HEK293T (cell line): ENCODE measurements at regions of chr12 and their contacts with region 1.

Region 1: DNA sequence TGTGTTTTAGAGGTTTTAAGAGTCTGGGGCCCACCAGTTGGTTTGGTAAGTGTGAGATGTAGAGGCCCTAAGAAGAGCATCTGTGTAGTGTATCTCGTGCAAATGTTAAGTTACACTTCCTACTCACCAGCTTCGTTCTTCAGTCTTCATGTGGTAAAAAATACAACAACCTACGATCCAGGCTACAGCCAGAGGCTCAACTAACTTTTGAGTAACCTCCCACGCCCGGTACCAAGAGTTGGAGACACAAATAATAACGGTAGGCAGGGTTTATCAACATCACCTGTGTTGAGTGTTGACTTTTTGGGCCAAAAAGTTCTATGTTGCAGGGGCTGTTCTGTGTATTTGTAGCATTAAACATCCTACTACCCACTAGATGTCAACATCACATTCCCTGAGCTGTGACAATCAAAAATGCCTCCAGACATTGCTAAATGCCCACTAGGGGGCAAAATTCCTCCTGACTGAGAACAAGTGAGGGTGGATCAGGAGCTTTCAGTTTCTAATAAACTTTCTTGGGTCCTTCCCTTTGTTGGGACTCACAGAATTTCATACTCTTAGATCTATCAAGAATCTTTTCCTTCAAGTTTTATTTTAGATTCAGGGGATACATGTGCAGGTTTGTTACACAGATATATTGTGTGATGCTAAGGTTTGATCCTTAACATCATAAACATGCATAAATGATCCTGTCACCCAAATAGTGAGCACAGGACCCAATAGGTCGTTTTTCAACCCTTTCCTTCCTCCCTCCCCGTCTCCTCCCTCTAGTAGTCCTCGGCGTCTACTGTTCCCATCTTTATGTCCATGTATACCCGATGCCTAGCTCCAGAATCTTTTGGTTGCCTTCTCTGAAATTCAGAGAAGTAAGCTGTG is 94.7 kb downstream of the SLC2A13 start:
- DNase-seq: peak; percentile 55

Region 2: GRCh38 chr12:39966251-39966650 is 44.9 kb before region 1 on chr12:
- CTCF ChIA-PET with region 1: no interaction called
- POLR2A ChIA-PET with region 1: no interaction called
- DNase-seq: no peak

Region 3: GRCh38 chr12:40104461-40105264 is 93.5 kb after region 1 on chr12:
- CTCF ChIA-PET with region 1: interaction called, 13 read pairs
- POLR2A ChIA-PET with region 1: interaction called, 5 read pairs
- DNase-seq: peak; percentile 23